Adrenal gland (tissue), 19 donors: ENCODE measurements at regions of chr20 and their contacts with region 1.

Region 1: GRCh38 chr20:63381807-63382322 is 20.7 kb upstream of the CHRNA4 start:
- DNase-seq: peak in 1 of 7 donors; percentile 13
- H3K4me3 ChIP-seq: no peak overlapping the region
- H3K27ac ChIP-seq: no peak overlapping the region
- H3K4me1 ChIP-seq: no peaks in the 10 kb centered on the region
- H3K27me3 ChIP-seq: peaks cover 12% of the 10 kb centered on the region
- CTCF ChIP-seq: peak; percentile 82 to 88 (median 84)
- POLR2A ChIP-seq: no peak

Region 2: DNA sequence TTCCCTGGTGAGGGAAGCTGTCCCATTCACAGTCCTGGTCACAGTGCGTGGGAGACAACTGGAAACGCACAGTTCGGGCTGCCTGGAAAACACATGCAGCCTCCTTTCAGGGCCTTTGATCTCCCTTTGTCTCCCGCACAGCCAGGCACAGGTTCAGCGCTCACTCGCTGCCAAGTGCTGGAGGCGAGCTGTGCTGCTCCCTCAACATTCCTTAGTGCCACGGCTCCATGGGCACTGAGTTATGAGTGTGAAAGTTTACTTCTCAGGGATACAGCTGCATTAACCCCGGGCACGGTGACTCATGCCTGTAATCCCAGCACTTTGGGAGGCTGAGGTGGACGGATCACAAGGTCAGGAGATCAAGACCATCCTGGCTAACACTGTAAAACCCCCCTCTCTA is 175.0 kb before region 1 on chr20:
- intact Hi-C with region 1: no loop called
- DNase-seq: peak in 6 of 7 donors; percentile 63 to 88 (median 82)
- H3K4me3 ChIP-seq: no peak overlapping the region
- H3K27ac ChIP-seq: peak overlapping the region in 3 of 5 donors; percentile 21 to 79 (median 38)
- H3K4me1 ChIP-seq: peaks cover 6 to 24% of the 10 kb centered on the region in 2 donors
- H3K27me3 ChIP-seq: no peaks in the 10 kb centered on the region
- CTCF ChIP-seq: no peak
- POLR2A ChIP-seq: peak in 1 of 2 donors; percentile 34

Region 3: GRCh38 chr20:63309261-63310071 is 72.4 kb before region 1 on chr20:
- intact Hi-C with region 1: loop called (anchors 2 kb)
- DNase-seq: peak in 6 of 7 donors; percentile 38 to 69 (median 46)
- H3K4me3 ChIP-seq: no peak overlapping the region
- H3K27ac ChIP-seq: no peak overlapping the region
- H3K4me1 ChIP-seq: no peaks in the 10 kb centered on the region
- H3K27me3 ChIP-seq: peaks cover 36% of the 10 kb centered on the region
- CTCF ChIP-seq: peak; percentile 71 to 88 (median 82)
- POLR2A ChIP-seq: no peak